Activated T-helper 1 cell treated with anti-CD3 and anti-CD28 coated beads, Interleukin-12 subunit alpha, Interleukin-12 subunit beta, Interleukin-2, Interleukin-4 antibody, amounts not matched to agents 30 ng/mL and 10 ng/mL and 1 ng/mL, durations not matched to agents 14 hours and 24 hours and 36 hours (primary cell): ENCODE measurements at regions of chr7 and their contacts with region 1.

Region 1: GRCh38 chr7:129530795-129531391 is 28.6 kb downstream of the SMKR1 start:
- DNase-seq: peak; percentile 8
- H3K4me3 Mint-ChIP-seq: no peak overlapping the region
- H3K27ac Mint-ChIP-seq: peak overlapping the region; percentile 79
- H3K4me1 Mint-ChIP-seq: peaks cover 12% of the 10 kb centered on the region
- H3K27me3 Mint-ChIP-seq: no peaks in the 10 kb centered on the region

Region 2: DNA sequence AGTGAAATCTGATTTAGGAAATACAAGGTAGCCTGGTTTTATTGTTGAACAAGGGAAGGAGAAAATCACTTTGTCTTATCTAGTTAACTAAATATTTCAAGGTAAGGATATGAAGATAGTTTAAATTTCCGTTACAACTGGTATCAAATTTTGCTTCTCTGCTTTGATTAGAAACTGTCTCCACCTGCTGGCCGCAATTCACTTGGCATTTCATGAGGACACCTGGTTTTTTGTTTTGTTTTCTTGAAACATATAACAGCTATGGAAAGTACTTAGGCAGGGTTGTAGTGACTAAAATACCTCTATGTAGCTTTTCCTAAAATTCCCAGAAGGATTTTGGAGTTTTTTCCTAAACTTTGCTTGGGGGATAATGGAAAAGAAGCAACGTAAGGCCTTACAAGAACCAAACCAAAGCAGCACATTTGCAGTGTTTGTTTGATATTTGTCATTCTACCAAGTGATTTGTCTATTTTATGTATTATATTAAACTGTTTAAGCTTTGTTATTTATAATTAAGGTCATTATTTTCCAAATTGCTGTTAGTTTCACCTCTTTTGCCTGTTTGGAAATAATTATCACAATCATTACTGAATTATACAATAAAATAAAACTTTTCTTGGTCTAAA is 232.5 kb before region 1 on chr7:
- intact Hi-C with region 1: no loop called
- DNase-seq: peak; percentile 13
- H3K4me3 Mint-ChIP-seq: no peak overlapping the region
- H3K27ac Mint-ChIP-seq: no peak overlapping the region
- H3K4me1 Mint-ChIP-seq: no peaks in the 10 kb centered on the region
- H3K27me3 Mint-ChIP-seq: peaks cover 3% of the 10 kb centered on the region

Region 3: DNA sequence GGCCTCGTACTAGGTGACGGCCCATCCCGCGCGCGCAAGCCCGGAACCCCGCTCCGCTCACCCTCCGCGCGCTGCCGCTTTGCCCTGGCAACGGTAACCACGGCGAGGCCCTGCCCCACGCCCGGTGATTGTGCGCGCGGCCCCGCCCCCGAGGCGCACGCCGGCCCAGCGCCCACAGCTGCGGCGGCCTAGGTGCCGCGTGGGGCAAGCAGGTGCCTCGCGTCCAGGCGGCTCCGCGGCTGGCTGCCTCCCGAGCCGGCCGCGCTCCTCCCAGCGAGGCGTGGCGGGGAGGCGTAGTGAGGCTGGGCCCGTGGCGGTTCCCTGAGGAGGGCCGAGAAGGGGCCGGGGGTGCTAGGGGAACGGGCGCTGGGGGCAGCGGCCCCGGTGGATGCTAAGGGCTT is 28.5 kb before region 1 on chr7 and contains the start of gene SMKR1:
- intact Hi-C with region 1: loop called (anchors 1 kb)
- DNase-seq: peak; percentile 90
- H3K4me3 Mint-ChIP-seq: peak within 1 kb of the TSS; percentile 82
- H3K27ac Mint-ChIP-seq: peak within 1 kb of the TSS; percentile 86
- H3K4me1 Mint-ChIP-seq: peaks cover 19% of the 10 kb centered on the region
- H3K27me3 Mint-ChIP-seq: peaks cover 16% of the 10 kb centered on the region
- total RNA-seq, gene SMKR1: 4.8 and 5.7 TPM in 2 replicates

Region 4: GRCh38 chr7:130865408-130866236 is 1334.7 kb after region 1 on chr7:
- intact Hi-C with region 1: no loop called
- DNase-seq: no peak
- H3K4me3 Mint-ChIP-seq: no peak overlapping the region
- H3K27ac Mint-ChIP-seq: peak overlapping the region; percentile 22
- H3K4me1 Mint-ChIP-seq: peaks cover 6% of the 10 kb centered on the region
- H3K27me3 Mint-ChIP-seq: no peaks in the 10 kb centered on the region